ENCODE measurements at regions of chr1 and their contacts with region 1.

Region 1: DNA sequence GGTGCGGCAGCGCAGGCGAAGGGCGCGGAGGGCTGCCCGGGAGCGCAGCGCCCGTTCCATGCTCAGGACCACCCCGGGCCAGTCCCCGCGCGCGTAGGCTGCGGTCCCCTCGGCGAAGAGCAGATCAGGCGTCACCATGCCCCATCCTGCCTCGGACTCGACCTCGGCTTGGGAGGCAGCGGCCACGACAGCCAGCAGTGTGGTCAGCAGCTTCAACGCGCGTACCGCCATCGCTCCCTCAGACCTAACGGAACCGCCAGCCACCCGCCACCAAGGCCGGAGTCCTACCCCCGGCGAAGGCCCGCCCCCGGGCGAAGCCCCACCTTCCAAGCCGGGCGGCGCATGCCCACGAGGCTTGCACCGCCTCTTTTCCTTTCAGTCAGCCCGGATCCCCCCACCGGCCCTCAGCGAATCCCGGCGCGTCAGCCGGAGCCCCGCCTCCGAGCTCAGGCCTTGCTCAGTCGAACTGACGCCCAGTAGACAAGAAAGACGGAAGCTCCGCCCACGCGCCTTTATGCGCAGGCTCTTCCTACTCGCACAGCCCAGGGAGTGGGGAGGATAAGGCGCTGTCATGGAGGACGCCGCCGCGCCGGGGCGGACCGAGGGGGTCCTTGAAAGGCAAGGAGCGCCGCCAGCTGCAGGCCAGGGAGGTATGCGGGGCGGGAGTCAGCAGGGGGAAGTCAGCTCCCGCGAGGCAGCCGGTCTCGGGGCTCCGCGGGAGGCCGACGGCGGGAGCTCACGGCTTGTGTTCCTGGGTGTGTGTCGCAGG is at the starts of genes C1orf50 and P3H1:
- DNase-seq: peak; percentile 100
- ATAC-seq: peak; percentile 96
- H3K4me3 Mint-ChIP-seq: no peak within 1 kb of the TSS
- H3K27ac Mint-ChIP-seq: peak within 1 kb of the TSS; percentile 96
- H3K4me1 Mint-ChIP-seq: peaks cover 31% of the 10 kb centered on the region
- H3K27me3 Mint-ChIP-seq: no peaks in the 10 kb centered on the region
- total RNA-seq, gene C1orf50: 6.3 to 6.7 TPM
- total RNA-seq, gene P3H1: 42.9 to 45.5 TPM

Region 2: GRCh38 chr1:42681741-42682483 is 85.0 kb before region 1 on chr1 and contains the start of gene YBX1:
- CTCF ChIA-PET with region 1: interaction called, 8 read pairs
- POLR2A ChIA-PET with region 1: interaction called, 36 read pairs
- DNase-seq: peak; percentile 96
- ATAC-seq: peak; percentile 95
- H3K4me3 Mint-ChIP-seq: peak within 1 kb of the TSS; percentile 97
- H3K27ac Mint-ChIP-seq: peak within 1 kb of the TSS; percentile 99
- H3K4me1 Mint-ChIP-seq: peaks cover 49% of the 10 kb centered on the region
- H3K27me3 Mint-ChIP-seq: no peaks in the 10 kb centered on the region
- total RNA-seq, gene YBX1: 733 to 791 TPM

Region 3: DNA sequence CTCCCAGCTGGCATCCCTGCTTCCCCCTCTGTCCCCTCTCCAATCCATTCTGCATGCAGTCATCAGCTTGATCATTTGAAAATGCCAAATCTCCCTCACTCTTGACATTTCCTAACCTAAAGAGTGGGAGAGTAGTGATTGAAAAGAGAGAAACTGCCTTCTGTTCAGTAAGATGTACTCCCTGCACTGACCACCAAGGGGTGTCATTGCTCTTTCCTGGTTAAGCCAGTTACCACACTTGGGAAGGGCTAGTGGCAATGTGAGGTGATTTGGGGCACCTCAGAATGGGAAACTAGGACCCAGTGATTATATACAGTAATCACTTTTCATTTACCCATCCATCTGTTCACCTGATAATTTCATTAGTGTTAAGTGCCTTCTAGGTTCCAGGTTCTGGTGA is 10.9 kb after region 1 on chr1:
- CTCF ChIA-PET with region 1: interaction called, 90 read pairs
- POLR2A ChIA-PET with region 1: interaction called, 11 read pairs
- DNase-seq: peak; percentile 44
- ATAC-seq: peak; percentile 47
- H3K4me3 Mint-ChIP-seq: no peak overlapping the region
- H3K27ac Mint-ChIP-seq: peak overlapping the region; percentile 53
- H3K4me1 Mint-ChIP-seq: peaks cover 36% of the 10 kb centered on the region
- H3K27me3 Mint-ChIP-seq: no peaks in the 10 kb centered on the region

Region 4: GRCh38 chr1:42846257-42847110 is 79.6 kb after region 1 on chr1 and contains the start of gene ZNF691:
- CTCF ChIA-PET with region 1: interaction called, 22 read pairs
- POLR2A ChIA-PET with region 1: interaction called, 28 read pairs
- DNase-seq: peak; percentile 94
- ATAC-seq: peak; percentile 99
- H3K4me3 Mint-ChIP-seq: peak within 1 kb of the TSS; percentile 87
- H3K27ac Mint-ChIP-seq: peak within 1 kb of the TSS; percentile 80
- H3K4me1 Mint-ChIP-seq: peaks cover 30% of the 10 kb centered on the region
- H3K27me3 Mint-ChIP-seq: no peaks in the 10 kb centered on the region
- total RNA-seq, gene ZNF691: 8.0 to 8.9 TPM

Region 5: DNA sequence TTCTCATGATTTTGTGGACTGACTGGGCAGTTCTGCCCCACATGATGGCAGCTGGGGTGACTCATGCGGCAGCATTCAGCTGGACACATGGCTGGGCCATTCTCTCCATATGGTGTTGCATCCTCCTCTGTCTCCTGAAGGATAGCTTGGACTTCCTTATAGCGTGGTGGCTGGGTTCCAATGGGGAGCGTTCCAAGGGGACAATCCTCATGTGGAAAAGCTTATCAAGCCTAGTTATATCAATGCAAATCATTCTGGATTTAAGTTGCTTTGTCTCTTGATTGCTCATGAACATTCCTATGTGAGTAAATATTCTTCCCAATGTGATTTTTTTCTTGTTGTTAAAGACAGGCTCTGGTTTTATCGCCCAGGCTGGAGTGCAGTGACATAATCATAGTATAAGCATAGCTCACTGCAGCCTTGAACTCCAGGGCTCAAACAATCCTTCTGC is 204.9 kb after region 1 on chr1:
- CTCF ChIA-PET with region 1: no interaction called
- POLR2A ChIA-PET with region 1: no interaction called
- DNase-seq: no peak
- ATAC-seq: no peak
- H3K4me3 Mint-ChIP-seq: no peak overlapping the region
- H3K27ac Mint-ChIP-seq: no peak overlapping the region
- H3K4me1 Mint-ChIP-seq: no peaks in the 10 kb centered on the region
- H3K27me3 Mint-ChIP-seq: no peaks in the 10 kb centered on the region

Measured in activated CD8-positive, alpha-beta T cell treated with anti-CD3 and anti-CD28 coated beads, Interleukin-2, amount 10 ng/mL, durations not matched to agents 7 days and 5 days (primary cell).